ENCODE measurements at regions of chr17 and their contacts with region 1.

Region 1: GRCh38 chr17:60641810-60642220 is 35.8 kb upstream of the BCAS3 start:
- DNase-seq: peak; percentile 70
- H3K4me3 ChIP-seq: no peak overlapping the region
- H3K27ac ChIP-seq: peak overlapping the region in 1 of 4 donors; percentile 17
- H3K4me1 ChIP-seq: peaks cover 0 to 9% (median 6%) of the 10 kb centered on the region in 4 donors
- H3K27me3 ChIP-seq: no peaks in the 10 kb centered on the region
- CTCF ChIP-seq: peak; percentile 25 to 45 (median 35)
- EP300 ChIP-seq: no peak
- POLR2A ChIP-seq: no peak

Region 2: GRCh38 chr17:60468371-60468770 is 173.4 kb before region 1 on chr17:
- in situ Hi-C with region 1: loop called in 1 of 4 experiments (anchors 25 kb)
- intact Hi-C with region 1: no loop called
- DNase-seq: no peak
- H3K4me3 ChIP-seq: no peak overlapping the region
- H3K27ac ChIP-seq: peak overlapping the region in 1 of 4 donors; percentile 3
- H3K4me1 ChIP-seq: peaks cover 5 to 26% (median 10%) of the 10 kb centered on the region in 4 donors
- H3K27me3 ChIP-seq: no peaks in the 10 kb centered on the region
- CTCF ChIP-seq: no peak
- EP300 ChIP-seq: no peak
- POLR2A ChIP-seq: no peak

Region 3: GRCh38 chr17:60695960-60696359 is 54.1 kb after region 1 on chr17:
- in situ Hi-C with region 1: no loop called
- intact Hi-C with region 1: no loop called
- DNase-seq: no peak
- H3K4me3 ChIP-seq: no peak overlapping the region
- H3K27ac ChIP-seq: no peak overlapping the region
- H3K4me1 ChIP-seq: no peaks in the 10 kb centered on the region
- H3K27me3 ChIP-seq: no peaks in the 10 kb centered on the region
- CTCF ChIP-seq: no peak
- EP300 ChIP-seq: no peak
- POLR2A ChIP-seq: no peak

Region 4: GRCh38 chr17:60743282-60743681 is 101.5 kb after region 1 on chr17:
- in situ Hi-C with region 1: no loop called
- intact Hi-C with region 1: no loop called
- DNase-seq: no peak
- H3K4me3 ChIP-seq: no peak overlapping the region
- H3K27ac ChIP-seq: peak overlapping the region in 1 of 4 donors; percentile 40
- H3K4me1 ChIP-seq: peaks cover 0 to 19% (median 3%) of the 10 kb centered on the region in 4 donors
- H3K27me3 ChIP-seq: no peaks in the 10 kb centered on the region
- CTCF ChIP-seq: no peak
- EP300 ChIP-seq: no peak
- POLR2A ChIP-seq: no peak